Mammary epithelial cell (primary cell): ENCODE measurements at regions of chr5 and their contacts with region 1.

Region 1: DNA sequence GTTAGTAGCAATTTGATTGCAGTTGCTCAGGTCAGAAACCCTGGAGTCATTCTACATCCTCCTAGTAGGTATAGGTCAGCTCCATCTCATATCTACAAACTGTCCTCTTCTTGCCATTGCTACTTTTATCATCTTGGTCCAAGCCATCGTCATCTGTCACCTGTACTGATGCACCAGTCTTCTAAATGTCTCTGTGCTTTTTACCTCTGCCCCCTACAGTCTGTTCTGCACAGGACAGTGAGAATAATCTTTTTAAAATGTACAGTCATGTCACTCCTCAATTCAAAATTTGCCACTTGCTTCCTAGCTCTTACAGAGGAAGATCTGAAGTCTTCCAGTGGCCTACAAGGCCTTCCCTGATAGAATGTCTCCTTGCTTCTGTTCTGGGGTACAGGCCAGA is 6.8 kb downstream of the NNT start:
- DNase-seq: no peak
- H3K4me3 ChIP-seq: no peak overlapping the region
- H3K27ac ChIP-seq: no peak overlapping the region
- H3K4me1 ChIP-seq: no peaks in the 10 kb centered on the region
- H3K27me3 ChIP-seq: no peaks in the 10 kb centered on the region
- CTCF ChIP-seq: peak; percentile 14 to 47

Region 2: GRCh38 chr5:43400081-43400480 is 209.7 kb before region 1 on chr5:
- CTCF ChIA-PET with region 1: no interaction called
- dilution Hi-C with region 1: no loop called
- in situ Hi-C with region 1: no loop called
- intact Hi-C with region 1: loop called (anchors 1 kb)
- DNase-seq: peak; percentile 12
- H3K4me3 ChIP-seq: no peak overlapping the region
- H3K27ac ChIP-seq: no peak overlapping the region
- H3K4me1 ChIP-seq: peaks cover 7% of the 10 kb centered on the region
- H3K27me3 ChIP-seq: no peaks in the 10 kb centered on the region
- CTCF ChIP-seq: peak; percentile 23 to 55